ENCODE measurements at regions of chr5 and their contacts with region 1.

Region 1: DNA sequence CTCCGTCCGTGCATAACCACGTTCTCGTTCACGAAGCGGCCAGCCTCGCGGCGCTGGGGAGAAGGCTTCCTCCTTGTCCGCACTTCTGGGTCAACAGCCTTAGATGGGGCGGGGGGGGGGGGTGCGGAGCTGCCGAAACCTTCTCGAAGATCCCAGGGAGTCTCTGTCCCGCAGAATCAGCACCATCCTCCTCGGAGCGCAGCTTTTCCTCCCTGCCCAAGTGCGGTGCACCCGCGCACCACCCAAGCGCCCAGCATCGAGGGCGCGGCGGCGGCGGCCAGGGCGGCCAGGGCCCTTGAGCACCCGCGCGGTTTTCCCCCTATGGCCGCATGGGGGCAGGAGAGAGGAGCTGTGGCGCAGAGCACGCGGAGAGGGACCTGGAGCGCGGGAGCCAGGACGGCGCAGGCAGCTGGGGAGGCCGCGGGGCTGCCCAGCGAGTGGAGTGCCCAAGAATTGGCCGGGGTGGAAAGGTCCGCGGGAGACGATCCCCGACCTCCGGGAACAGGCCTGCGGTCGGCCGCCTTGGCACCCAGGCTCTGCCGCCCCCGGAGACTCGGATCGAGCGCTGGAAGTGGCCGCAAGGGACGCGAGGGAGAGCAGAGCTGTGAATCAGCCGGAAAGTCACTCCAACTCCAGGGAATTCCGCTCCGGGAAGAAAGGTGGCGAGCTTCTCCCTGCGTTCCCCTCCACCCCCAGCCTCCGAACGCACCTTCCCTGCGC is 43.1 kb downstream of the TMEM174 start:
- H3K4me3 Mint-ChIP-seq: peak overlapping the region; percentile 71
- H3K27ac Mint-ChIP-seq: no peak overlapping the region
- H3K4me1 Mint-ChIP-seq: peaks cover 14% of the 10 kb centered on the region
- H3K27me3 Mint-ChIP-seq: peaks cover 86% of the 10 kb centered on the region

Region 2: DNA sequence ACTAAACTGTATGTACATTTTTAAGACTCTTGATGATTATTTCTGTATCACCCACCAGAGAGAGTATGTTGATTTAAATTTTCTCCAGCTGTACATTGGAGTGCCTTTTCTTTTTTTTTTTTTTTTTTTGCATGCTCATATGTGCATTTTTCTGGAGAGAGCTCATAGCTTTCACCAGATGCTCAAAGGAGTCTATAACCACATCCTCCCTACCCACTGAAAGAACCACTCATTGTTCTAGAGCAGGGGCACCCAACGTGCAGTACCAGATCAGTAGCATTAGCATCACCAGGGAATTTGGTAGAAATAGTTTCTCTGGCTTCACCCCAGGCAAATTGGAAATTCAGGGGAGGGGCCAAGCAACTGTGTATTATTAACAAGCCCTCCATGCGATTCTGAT is 149.6 kb before region 1 on chr5:
- intact Hi-C with region 1: no loop called
- H3K4me3 Mint-ChIP-seq: no peak overlapping the region
- H3K27ac Mint-ChIP-seq: no peak overlapping the region
- H3K4me1 Mint-ChIP-seq: no peaks in the 10 kb centered on the region
- H3K27me3 Mint-ChIP-seq: no peaks in the 10 kb centered on the region

Region 3: GRCh38 chr5:73120222-73121118 is 95.6 kb before region 1 on chr5 and contains the start of gene TMEM171:
- intact Hi-C with region 1: no loop called
- H3K4me3 Mint-ChIP-seq: no peak within 1 kb of the TSS
- H3K27ac Mint-ChIP-seq: no peak within 1 kb of the TSS
- H3K4me1 Mint-ChIP-seq: peaks cover 10% of the 10 kb centered on the region
- H3K27me3 Mint-ChIP-seq: peaks cover 81% of the 10 kb centered on the region

Region 4: DNA sequence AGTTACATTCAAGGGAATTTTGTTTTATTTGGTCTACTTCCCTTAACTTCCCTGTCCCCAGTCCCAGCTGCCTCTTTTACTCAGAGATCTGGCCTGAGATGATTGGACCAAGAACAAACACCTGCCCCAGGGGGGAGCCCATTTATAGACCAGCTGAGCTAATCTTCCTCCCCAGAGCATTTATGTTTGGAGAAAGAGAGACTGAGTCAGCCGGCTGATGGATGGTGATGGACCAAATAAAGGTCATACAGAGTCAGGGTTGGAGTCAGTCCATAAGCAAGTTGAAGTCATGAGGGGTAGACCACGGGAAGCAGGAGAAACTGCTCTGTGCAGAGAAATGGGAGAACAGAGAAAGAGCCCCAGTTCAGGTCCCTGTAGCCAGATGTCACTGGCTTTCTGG is 34.6 kb after region 1 on chr5:
- intact Hi-C with region 1: no loop called
- H3K4me3 Mint-ChIP-seq: no peak overlapping the region
- H3K27ac Mint-ChIP-seq: no peak overlapping the region
- H3K4me1 Mint-ChIP-seq: no peaks in the 10 kb centered on the region
- H3K27me3 Mint-ChIP-seq: peaks cover 51% of the 10 kb centered on the region

Region 5: GRCh38 chr5:73454351-73455036 is 238.4 kb after region 1 on chr5:
- intact Hi-C with region 1: loop called (anchors 5 kb)
- H3K4me3 Mint-ChIP-seq: no peak overlapping the region
- H3K27ac Mint-ChIP-seq: no peak overlapping the region
- H3K4me1 Mint-ChIP-seq: peaks cover 12% of the 10 kb centered on the region
- H3K27me3 Mint-ChIP-seq: peaks cover 77% of the 10 kb centered on the region